Naive thymus-derived CD4-positive, alpha-beta T cell (primary cell): ENCODE measurements at regions of chr6 and their contacts with region 1.

Region 1: DNA sequence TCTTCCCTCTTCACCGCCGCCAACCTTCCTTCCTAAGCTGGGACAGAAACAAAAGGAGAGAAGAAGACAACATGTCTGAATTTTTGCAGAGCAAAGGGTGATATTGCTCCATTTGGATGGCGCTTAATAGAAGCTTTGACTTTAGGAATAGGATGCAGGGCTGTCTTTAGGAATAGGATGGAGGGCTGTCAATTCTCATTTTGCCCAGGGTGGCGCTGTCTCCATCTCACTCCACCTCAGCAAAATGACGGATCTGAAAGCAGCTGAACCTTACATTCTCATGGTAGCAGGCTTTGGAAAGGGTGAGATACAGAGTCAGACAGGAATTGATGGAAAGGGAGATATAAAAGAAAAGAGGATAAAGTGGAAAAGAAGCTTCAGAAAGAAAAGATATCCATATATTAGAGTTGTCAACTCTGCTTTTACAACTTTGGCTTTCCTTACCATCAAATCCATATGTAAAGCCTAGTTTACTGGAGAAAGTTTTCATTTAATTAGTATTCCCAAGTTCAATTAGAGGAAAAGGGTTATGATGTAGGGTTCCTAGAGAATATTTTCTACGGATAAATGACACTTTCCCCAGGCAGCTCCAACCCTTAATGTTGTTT is 2.4 kb downstream of the MTCL3 start:
- DNase-seq: peak in 5 of 9 donors; percentile 29 to 44 (median 34)
- ATAC-seq: peak; percentile 58
- H3K4me3 ChIP-seq: peak overlapping the region; percentile 58
- H3K4me3 Mint-ChIP-seq: peak overlapping the region; percentile 84 to 98 (median 88)
- H3K27ac ChIP-seq: no peak overlapping the region
- H3K27ac Mint-ChIP-seq: peak overlapping the region in 7 of 9 donors; percentile 18 to 85 (median 79)
- H3K4me1 ChIP-seq: peaks cover 15 to 17% of the 10 kb centered on the region in 2 donors
- H3K4me1 Mint-ChIP-seq: peaks cover 23 to 44% (median 32%) of the 10 kb centered on the region in 7 donors
- H3K27me3 ChIP-seq: peaks cover 0 to 21% of the 10 kb centered on the region in 2 donors
- H3K27me3 Mint-ChIP-seq: peaks cover 27 to 38% (median 37%) of the 10 kb centered on the region in 5 donors

Region 2: DNA sequence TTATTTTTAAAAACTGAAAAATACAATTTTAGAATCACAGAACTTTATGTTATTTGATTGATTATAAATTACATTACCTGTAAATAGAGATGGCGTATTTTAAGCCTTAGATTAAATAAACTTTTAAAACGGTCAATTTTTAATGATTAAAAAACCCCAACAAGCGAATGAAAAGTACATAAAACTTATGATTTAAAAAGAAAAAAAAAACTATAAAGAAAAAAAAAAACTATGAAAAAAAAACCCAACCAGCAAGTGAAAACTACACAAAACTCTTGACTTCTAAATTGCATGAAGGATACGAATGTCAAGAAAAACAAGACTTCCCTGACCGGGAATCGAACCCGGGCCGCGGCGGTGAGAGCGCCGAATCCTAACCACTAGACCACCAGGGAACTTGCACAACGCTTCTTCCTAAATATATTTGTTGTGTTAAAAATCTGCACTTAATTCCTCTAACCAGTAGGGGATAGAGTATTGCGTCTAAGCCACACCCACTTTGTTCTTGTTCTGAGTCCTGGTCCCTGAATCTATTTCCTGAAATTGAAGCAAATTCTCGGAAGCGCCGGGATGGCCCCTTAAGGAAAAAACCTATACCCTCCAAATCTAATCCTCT is 1736.7 kb before region 1 on chr6:
- CTCF ChIA-PET with region 1: no interaction called
- POLR2A ChIA-PET with region 1: interaction called, 3 read pairs
- intact Hi-C with region 1: loop called in 1 of 2 experiments (anchors 5 kb)
- DNase-seq: peak; percentile 83 to 96 (median 94)
- ATAC-seq: peak; percentile 89
- H3K4me3 ChIP-seq: peak overlapping the region; percentile 84
- H3K4me3 Mint-ChIP-seq: no peak overlapping the region
- H3K27ac ChIP-seq: peak overlapping the region; percentile 77
- H3K27ac Mint-ChIP-seq: no peak overlapping the region
- H3K4me1 ChIP-seq: peaks cover 4 to 19% of the 10 kb centered on the region in 2 donors
- H3K4me1 Mint-ChIP-seq: peaks cover 5 to 27% (median 22%) of the 10 kb centered on the region in 7 donors
- H3K27me3 ChIP-seq: no peaks in the 10 kb centered on the region
- H3K27me3 Mint-ChIP-seq: peaks cover 0 to 28% (median 0%) of the 10 kb centered on the region in 5 donors

Region 3: GRCh38 chr6:127266178-127266891 is 250.4 kb before region 1 on chr6 and contains the start of gene RNF146:
- CTCF ChIA-PET with region 1: no interaction called
- POLR2A ChIA-PET with region 1: interaction called, 4 read pairs
- intact Hi-C with region 1: loop called (anchors 1 kb)
- DNase-seq: peak; percentile 55 to 81 (median 75)
- ATAC-seq: peak; percentile 86
- H3K4me3 ChIP-seq: peak within 1 kb of the TSS; percentile 96
- H3K4me3 Mint-ChIP-seq: peak within 1 kb of the TSS; percentile 92 to 100 (median 96)
- H3K27ac ChIP-seq: peak within 1 kb of the TSS; percentile 95
- H3K27ac Mint-ChIP-seq: peak within 1 kb of the TSS; percentile 91 to 100 (median 98)
- H3K4me1 ChIP-seq: peaks cover 12 to 15% of the 10 kb centered on the region in 2 donors
- H3K4me1 Mint-ChIP-seq: peaks cover 28 to 53% (median 41%) of the 10 kb centered on the region in 7 donors
- H3K27me3 ChIP-seq: no peaks in the 10 kb centered on the region
- H3K27me3 Mint-ChIP-seq: peaks cover 0 to 19% (median 0%) of the 10 kb centered on the region in 5 donors
- total RNA-seq, gene RNF146: 17.6 to 38.1 (median 20.8) TPM

Region 4: DNA sequence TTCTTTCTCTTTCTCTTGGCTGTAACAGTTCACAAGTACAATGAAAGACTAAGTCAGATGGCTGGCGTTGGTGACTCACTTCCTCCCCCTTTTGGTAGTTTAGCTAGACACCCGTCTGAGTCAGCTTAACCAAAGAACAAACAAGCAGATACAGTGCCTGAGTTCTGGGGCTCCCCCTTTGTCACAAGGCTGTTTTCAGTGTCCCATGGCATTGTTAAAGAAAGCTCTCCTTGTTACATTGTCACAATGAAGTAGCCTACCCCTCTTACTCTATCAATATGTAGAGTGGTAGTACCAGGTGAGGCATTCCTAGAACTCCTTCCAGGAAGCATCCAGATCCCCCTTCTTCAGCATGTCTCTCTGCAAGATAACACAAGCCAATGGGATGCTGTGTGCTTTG is 96.2 kb before region 1 on chr6:
- CTCF ChIA-PET with region 1: no interaction called
- POLR2A ChIA-PET with region 1: no interaction called
- intact Hi-C with region 1: loop called in 1 of 2 experiments (anchors 2 kb)
- DNase-seq: peak in 8 of 9 donors; percentile 27 to 75 (median 56)
- ATAC-seq: peak; percentile 99
- H3K4me3 ChIP-seq: no peak overlapping the region
- H3K4me3 Mint-ChIP-seq: no peak overlapping the region
- H3K27ac ChIP-seq: no peak overlapping the region
- H3K27ac Mint-ChIP-seq: peak overlapping the region in 6 of 9 donors; percentile 5 to 81 (median 16)
- H3K4me1 ChIP-seq: no peaks in the 10 kb centered on the region
- H3K4me1 Mint-ChIP-seq: peaks cover 0 to 11% (median 5%) of the 10 kb centered on the region in 7 donors
- H3K27me3 ChIP-seq: no peaks in the 10 kb centered on the region
- H3K27me3 Mint-ChIP-seq: no peaks in the 10 kb centered on the region

Region 5: GRCh38 chr6:127533011-127533410 is 16.2 kb after region 1 on chr6:
- CTCF ChIA-PET with region 1: no interaction called
- POLR2A ChIA-PET with region 1: no interaction called
- intact Hi-C with region 1: loop called (anchors 1 to 2 kb)
- DNase-seq: no peak
- ATAC-seq: no peak
- H3K4me3 ChIP-seq: no peak overlapping the region
- H3K4me3 Mint-ChIP-seq: no peak overlapping the region
- H3K27ac ChIP-seq: no peak overlapping the region
- H3K27ac Mint-ChIP-seq: no peak overlapping the region
- H3K4me1 ChIP-seq: no peaks in the 10 kb centered on the region
- H3K4me1 Mint-ChIP-seq: no peaks in the 10 kb centered on the region
- H3K27me3 ChIP-seq: no peaks in the 10 kb centered on the region
- H3K27me3 Mint-ChIP-seq: peaks cover 18 to 53% (median 22%) of the 10 kb centered on the region in 5 donors

Region 6: GRCh38 chr6:127893541-127893940 is 376.8 kb after region 1 on chr6:
- CTCF ChIA-PET with region 1: no interaction called
- POLR2A ChIA-PET with region 1: no interaction called
- intact Hi-C with region 1: loop called (anchors 10 kb)
- DNase-seq: peak in 1 of 9 donors; percentile 35
- ATAC-seq: no peak
- H3K4me3 ChIP-seq: peak overlapping the region; percentile 41
- H3K4me3 Mint-ChIP-seq: peak overlapping the region; percentile 60 to 91 (median 82)
- H3K27ac ChIP-seq: peak overlapping the region; percentile 70
- H3K27ac Mint-ChIP-seq: peak overlapping the region; percentile 58 to 100 (median 90)
- H3K4me1 ChIP-seq: peaks cover 18 to 29% of the 10 kb centered on the region in 2 donors
- H3K4me1 Mint-ChIP-seq: peaks cover 34 to 74% (median 66%) of the 10 kb centered on the region in 7 donors
- H3K27me3 ChIP-seq: no peaks in the 10 kb centered on the region
- H3K27me3 Mint-ChIP-seq: no peaks in the 10 kb centered on the region

Region 7: DNA sequence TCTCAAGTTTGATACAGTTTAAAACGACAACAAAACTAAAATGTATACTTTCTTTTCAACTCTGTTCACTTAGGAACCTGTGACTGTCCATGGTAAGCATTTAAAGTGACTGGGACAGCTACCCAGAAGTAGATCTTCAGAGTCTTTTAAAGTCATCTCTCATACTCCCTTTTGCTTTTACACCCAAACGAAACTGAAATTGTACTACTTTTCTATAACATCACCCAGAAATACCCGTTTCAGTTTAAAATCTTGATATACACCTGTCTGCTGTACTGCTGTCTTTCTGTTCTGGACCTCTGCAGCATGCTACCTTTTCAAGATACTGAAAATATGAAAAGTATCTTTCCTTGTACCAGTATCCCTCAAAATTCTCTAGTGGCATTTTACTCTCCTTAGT is 554.4 kb after region 1 on chr6:
- CTCF ChIA-PET with region 1: no interaction called
- POLR2A ChIA-PET with region 1: no interaction called
- intact Hi-C with region 1: no loop called
- DNase-seq: no peak
- ATAC-seq: no peak
- H3K4me3 ChIP-seq: no peak overlapping the region
- H3K4me3 Mint-ChIP-seq: no peak overlapping the region
- H3K27ac ChIP-seq: no peak overlapping the region
- H3K27ac Mint-ChIP-seq: no peak overlapping the region
- H3K4me1 ChIP-seq: no peaks in the 10 kb centered on the region
- H3K4me1 Mint-ChIP-seq: peaks cover 0 to 4% (median 0%) of the 10 kb centered on the region in 7 donors
- H3K27me3 ChIP-seq: no peaks in the 10 kb centered on the region
- H3K27me3 Mint-ChIP-seq: peaks cover 0 to 3% (median 0%) of the 10 kb centered on the region in 5 donors